Pancreas (tissue), 10 donors: ENCODE measurements at regions of chr6 and their contacts with region 1.

Region 1: DNA sequence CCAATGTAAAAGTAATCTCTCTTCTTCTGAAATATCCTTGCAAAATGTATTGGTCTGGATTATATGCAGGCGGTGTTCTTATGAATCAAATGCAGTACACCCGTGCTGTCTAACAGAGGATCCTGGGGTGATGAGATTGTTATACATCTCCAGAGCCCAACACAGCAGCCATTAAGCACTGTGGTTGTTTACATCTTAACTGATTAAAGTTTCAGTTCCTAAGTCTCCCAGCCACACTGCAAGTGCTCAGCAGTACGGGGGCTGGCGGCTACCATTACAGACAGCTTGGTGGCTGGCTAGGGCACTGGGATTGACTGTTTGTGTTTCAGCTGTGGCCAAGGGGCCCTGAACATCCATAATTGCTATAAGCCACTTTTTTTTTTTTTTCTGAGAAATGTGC is 7.0 kb downstream of the UNC93A start:
- DNase-seq: no peak
- ATAC-seq: no peak
- H3K4me3 ChIP-seq: no peak overlapping the region
- H3K27ac ChIP-seq: no peak overlapping the region
- H3K4me1 ChIP-seq: no peaks in the 10 kb centered on the region
- H3K27me3 ChIP-seq: no peaks in the 10 kb centered on the region
- CTCF ChIP-seq: no peak

Region 2: GRCh38 chr6:167219967-167220512 is 78.1 kb before region 1 on chr6:
- intact Hi-C with region 1: loop called in 1 of 3 experiments (anchors 10 kb)
- DNase-seq: no peak
- ATAC-seq: no peak
- H3K4me3 ChIP-seq: no peak overlapping the region
- H3K27ac ChIP-seq: no peak overlapping the region
- H3K4me1 ChIP-seq: no peaks in the 10 kb centered on the region
- H3K27me3 ChIP-seq: no peaks in the 10 kb centered on the region
- CTCF ChIP-seq: no peak